GM12878 (cell line): ENCODE measurements at regions of chr6 and their contacts with region 1.

Region 1: GRCh38 chr6:155248008-155249001 is 15.5 kb upstream of the CLDN20 start:
- DNase-seq: peak; percentile 36
- ATAC-seq: peak; percentile 88
- H3K4me3 ChIP-seq: no peak overlapping the region
- H3K27ac ChIP-seq: no peak overlapping the region
- H3K4me1 ChIP-seq: peaks cover 4% of the 10 kb centered on the region; the same call in 1 of the 2 replicates
- H3K27me3 ChIP-seq: no peaks in the 10 kb centered on the region
- CTCF ChIP-seq: peak; percentile 67 to 70 (median 69); a peak in 5 of 6 replicates
- EP300 ChIP-seq: no peak
- POLR2A ChIP-seq: no peak
- RAD21 ChIP-seq: peak; percentile 92

Region 2: DNA sequence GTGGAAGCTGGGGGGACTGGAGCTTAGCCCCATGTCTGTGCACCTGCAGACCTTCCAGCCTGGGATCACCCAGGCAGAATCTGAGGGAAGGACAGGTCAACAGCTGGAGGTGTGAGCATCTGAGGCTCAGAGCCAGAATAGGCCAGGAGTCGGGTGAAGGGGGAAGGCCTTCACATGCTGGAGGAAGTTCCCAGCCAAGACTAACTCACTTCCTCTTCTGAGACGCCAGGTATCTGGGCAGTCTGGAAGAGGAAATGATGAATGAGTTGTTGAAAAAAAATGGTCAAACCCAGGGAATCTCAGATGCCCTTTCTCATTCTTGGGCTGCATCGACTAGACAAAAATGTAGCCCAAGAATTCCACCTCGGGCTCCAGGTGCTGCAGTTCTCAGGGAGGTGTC is 326.8 kb before region 1 on chr6:
- CTCF ChIA-PET with region 1: interaction called, 10 read pairs
- POLR2A ChIA-PET with region 1: no interaction called
- RAD21 ChIA-PET with region 1: interaction called, 5 read pairs
- SMC1A ChIA-PET with region 1: no interaction called
- in situ Hi-C with region 1: loop called (anchors 5 kb)
- intact Hi-C with region 1: no loop called
- DNase-seq: no peak
- ATAC-seq: peak; percentile 73
- H3K4me3 ChIP-seq: no peak overlapping the region
- H3K27ac ChIP-seq: no peak overlapping the region
- H3K4me1 ChIP-seq: no peaks in the 10 kb centered on the region
- H3K27me3 ChIP-seq: no peaks in the 10 kb centered on the region
- CTCF ChIP-seq: no peak
- EP300 ChIP-seq: no peak
- POLR2A ChIP-seq: no peak
- RAD21 ChIP-seq: no peak

Region 3: DNA sequence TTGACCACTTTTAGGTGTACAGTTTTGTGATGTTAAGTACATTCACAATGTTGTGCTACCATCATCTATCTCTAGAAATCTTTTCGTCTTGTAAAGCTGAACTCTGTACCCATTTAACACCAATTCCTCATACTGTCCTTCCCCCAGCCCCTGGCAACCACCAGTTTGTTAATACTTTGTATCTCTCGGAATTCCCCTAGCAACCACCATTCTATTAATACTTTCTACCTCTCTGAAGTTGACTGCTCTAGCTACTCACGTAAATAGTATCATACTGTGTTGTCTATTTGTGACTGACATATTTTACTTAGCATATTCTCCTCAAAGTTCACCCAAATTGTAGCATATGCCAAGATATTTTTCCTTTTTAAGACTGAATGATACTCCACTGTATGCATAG is 66.8 kb before region 1 on chr6:
- CTCF ChIA-PET with region 1: interaction called, 228 read pairs
- POLR2A ChIA-PET with region 1: interaction called, 8 read pairs
- RAD21 ChIA-PET with region 1: interaction called, 178 read pairs
- SMC1A ChIA-PET with region 1: interaction called, 224 read pairs
- in situ Hi-C with region 1: loop called (anchors 5 kb)
- intact Hi-C with region 1: loop called (anchors 1 kb)
- DNase-seq: no peak
- ATAC-seq: peak; percentile 60
- H3K4me3 ChIP-seq: 0 out of 2 replicates have a peak overlapping the region, but pooled peaks have one; percentile 16
- H3K27ac ChIP-seq: peak overlapping the region; percentile 81
- H3K4me1 ChIP-seq: peaks cover 22% of the 10 kb centered on the region
- H3K27me3 ChIP-seq: no peaks in the 10 kb centered on the region
- CTCF ChIP-seq: no peak
- EP300 ChIP-seq: peak; percentile 66 to 88
- POLR2A ChIP-seq: no peak
- RAD21 ChIP-seq: no peak

Region 4: DNA sequence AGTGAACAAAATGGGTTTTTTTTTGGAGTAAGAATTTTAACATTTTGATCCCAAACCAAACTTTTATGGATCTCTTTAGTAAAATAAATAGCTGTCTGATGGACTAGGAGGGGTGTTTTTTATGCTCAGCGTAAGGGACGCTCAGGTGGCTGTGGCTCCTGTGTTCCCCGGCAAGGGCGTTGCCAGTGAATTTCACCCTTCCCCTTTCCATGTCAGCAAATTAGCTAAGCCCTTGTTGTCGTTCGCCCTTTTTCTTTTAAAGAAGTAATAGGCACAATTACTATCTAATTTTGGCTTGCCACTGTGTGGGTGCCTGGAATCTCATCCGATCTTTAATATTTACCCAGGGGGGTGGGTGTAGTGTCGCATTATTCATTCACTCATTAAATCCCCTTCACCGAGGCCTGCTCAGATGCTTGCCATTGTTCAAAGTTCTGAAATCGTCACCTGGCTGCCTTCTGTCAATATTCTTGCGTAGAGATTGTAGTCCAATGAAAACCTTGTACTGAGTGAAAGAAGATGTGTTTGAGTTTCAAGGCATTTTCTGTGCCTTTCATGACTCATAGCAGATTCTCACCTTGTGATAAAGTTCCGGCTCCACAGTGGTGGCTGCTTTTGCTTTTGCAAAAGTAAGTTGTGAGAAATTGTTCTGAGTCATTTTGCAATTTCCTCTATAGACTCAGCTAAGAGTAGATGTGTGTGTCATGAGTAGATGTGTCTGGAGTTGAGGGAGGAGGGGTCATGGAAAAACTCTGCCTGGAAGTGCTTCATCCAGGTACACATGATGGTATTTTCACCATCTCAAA is 24.5 kb before region 1 on chr6:
- CTCF ChIA-PET with region 1: interaction called, 22 read pairs
- POLR2A ChIA-PET with region 1: interaction called, 3 read pairs
- RAD21 ChIA-PET with region 1: interaction called, 4 read pairs
- SMC1A ChIA-PET with region 1: interaction called, 10 read pairs
- in situ Hi-C with region 1: no loop called
- intact Hi-C with region 1: no loop called
- DNase-seq: peak; percentile 81
- ATAC-seq: peak; percentile 99
- H3K4me3 ChIP-seq: no peak overlapping the region
- H3K27ac ChIP-seq: peak overlapping the region; percentile 15; the same call in 1 of the 2 replicates
- H3K4me1 ChIP-seq: peaks cover 15% of the 10 kb centered on the region
- H3K27me3 ChIP-seq: no peaks in the 10 kb centered on the region
- CTCF ChIP-seq: no peak
- EP300 ChIP-seq: peak; percentile 39 to 84; a peak in 2 of 4 replicates
- POLR2A ChIP-seq: no peak
- RAD21 ChIP-seq: no peak

Region 5: DNA sequence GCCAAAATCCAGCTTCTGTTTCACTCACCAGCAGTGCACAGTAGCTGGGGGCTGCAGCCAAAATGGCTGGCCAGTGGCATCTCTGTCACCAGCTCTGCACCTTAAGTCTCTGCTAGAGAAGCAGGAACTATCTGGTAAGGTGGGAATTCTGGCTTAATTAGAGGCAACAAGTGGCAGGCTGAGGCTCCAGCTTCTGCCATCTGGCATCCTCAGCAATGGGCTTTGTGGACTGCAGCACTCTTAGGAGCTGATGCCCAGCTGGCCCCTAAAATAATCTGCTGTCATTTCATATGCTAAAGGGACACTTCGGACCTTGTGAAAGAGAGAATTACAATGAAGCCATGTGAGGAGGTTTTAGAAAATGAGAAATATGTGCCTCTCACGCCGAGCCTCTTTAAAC is 10.9 kb after region 1 on chr6:
- CTCF ChIA-PET with region 1: interaction called, 7 read pairs
- POLR2A ChIA-PET with region 1: interaction called, 3 read pairs
- RAD21 ChIA-PET with region 1: interaction called, 13 read pairs
- SMC1A ChIA-PET with region 1: interaction called, 15 read pairs
- in situ Hi-C with region 1: no loop called
- intact Hi-C with region 1: no loop called
- DNase-seq: no peak
- ATAC-seq: no peak
- H3K4me3 ChIP-seq: no peak overlapping the region
- H3K27ac ChIP-seq: no peak overlapping the region
- H3K4me1 ChIP-seq: peaks cover 17% of the 10 kb centered on the region
- H3K27me3 ChIP-seq: no peaks in the 10 kb centered on the region
- CTCF ChIP-seq: no peak
- EP300 ChIP-seq: no peak
- POLR2A ChIP-seq: no peak
- RAD21 ChIP-seq: no peak

Region 6: GRCh38 chr6:155837474-155837873 is 589.2 kb after region 1 on chr6:
- CTCF ChIA-PET with region 1: no interaction called
- POLR2A ChIA-PET with region 1: no interaction called
- RAD21 ChIA-PET with region 1: no interaction called
- SMC1A ChIA-PET with region 1: no interaction called
- in situ Hi-C with region 1: no loop called
- intact Hi-C with region 1: no loop called
- DNase-seq: no peak
- ATAC-seq: no peak
- H3K4me3 ChIP-seq: no peak overlapping the region
- H3K27ac ChIP-seq: no peak overlapping the region
- H3K4me1 ChIP-seq: no peaks in the 10 kb centered on the region
- H3K27me3 ChIP-seq: no peaks in the 10 kb centered on the region
- CTCF ChIP-seq: no peak
- EP300 ChIP-seq: no peak
- POLR2A ChIP-seq: no peak
- RAD21 ChIP-seq: no peak